ENCODE measurements at regions of chr16 and their contacts with region 1.

Region 1: DNA sequence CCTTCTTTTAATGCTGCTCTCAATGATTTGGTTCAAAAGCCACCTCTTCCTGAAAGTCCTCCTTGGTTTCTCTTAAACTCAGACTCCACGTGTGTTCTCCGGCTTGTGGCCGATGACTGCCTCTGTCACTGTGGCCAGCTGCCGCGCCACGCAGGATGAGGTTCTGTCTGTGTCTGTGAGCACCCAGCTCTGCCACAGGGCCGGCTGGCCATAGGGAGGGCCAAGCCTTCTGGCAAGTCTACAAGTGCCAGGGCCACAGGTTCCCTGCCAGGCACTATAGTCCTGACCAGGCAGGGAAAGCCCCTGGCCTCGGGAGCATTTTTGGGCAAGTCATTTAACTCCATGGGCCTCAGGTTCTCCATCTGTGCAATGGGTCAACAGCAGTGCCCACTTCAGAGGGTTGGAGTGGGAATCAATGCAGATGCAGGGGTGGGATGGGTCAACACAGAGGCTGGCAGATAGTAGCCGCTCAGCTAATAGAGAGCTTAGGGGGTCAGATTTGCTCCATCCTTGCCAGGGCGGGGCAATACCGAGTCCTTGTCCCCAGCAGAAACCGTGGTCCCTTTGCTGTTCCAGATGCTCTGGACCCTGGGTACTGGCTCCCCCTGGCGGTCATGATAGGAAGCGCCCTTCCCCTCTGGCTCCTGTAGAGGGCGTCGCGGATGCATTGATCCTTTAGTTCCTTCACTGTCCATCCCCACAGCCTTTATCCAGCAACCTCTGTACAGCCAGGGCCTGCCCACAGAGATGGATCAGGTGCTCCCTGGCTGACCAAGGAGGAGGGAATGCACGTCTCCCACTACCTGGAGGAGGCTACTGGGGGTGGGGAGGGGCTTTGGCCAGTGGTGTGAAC is 19.3 kb upstream of the ADGRG3 start:
- DNase-seq: peak; percentile 87
- H3K4me3 Mint-ChIP-seq: no peak overlapping the region
- H3K27ac Mint-ChIP-seq: peak overlapping the region; percentile 77
- H3K4me1 Mint-ChIP-seq: peaks cover 40% of the 10 kb centered on the region
- H3K27me3 Mint-ChIP-seq: no peaks in the 10 kb centered on the region

Region 2: GRCh38 chr16:56716761-56717160 is 932.1 kb before region 1 on chr16:
- CTCF ChIA-PET with region 1: no interaction called
- POLR2A ChIA-PET with region 1: no interaction called
- DNase-seq: no peak
- H3K4me3 Mint-ChIP-seq: no peak overlapping the region
- H3K27ac Mint-ChIP-seq: no peak overlapping the region
- H3K4me1 Mint-ChIP-seq: no peaks in the 10 kb centered on the region
- H3K27me3 Mint-ChIP-seq: peaks cover 6% of the 10 kb centered on the region

Region 3: GRCh38 chr16:57531635-57532265 is 117.1 kb before region 1 on chr16:
- CTCF ChIA-PET with region 1: no interaction called
- POLR2A ChIA-PET with region 1: no interaction called
- DNase-seq: no peak
- H3K4me3 Mint-ChIP-seq: peak overlapping the region; percentile 25
- H3K27ac Mint-ChIP-seq: peak overlapping the region; percentile 97
- H3K4me1 Mint-ChIP-seq: peaks cover 70% of the 10 kb centered on the region
- H3K27me3 Mint-ChIP-seq: no peaks in the 10 kb centered on the region

Region 4: GRCh38 chr16:57591086-57591869 is 57.5 kb before region 1 on chr16:
- CTCF ChIA-PET with region 1: interaction called, 55 read pairs
- POLR2A ChIA-PET with region 1: no interaction called
- DNase-seq: peak; percentile 72
- H3K4me3 Mint-ChIP-seq: peak overlapping the region; percentile 53
- H3K27ac Mint-ChIP-seq: peak overlapping the region; percentile 92
- H3K4me1 Mint-ChIP-seq: peaks cover 58% of the 10 kb centered on the region
- H3K27me3 Mint-ChIP-seq: no peaks in the 10 kb centered on the region

Region 5: DNA sequence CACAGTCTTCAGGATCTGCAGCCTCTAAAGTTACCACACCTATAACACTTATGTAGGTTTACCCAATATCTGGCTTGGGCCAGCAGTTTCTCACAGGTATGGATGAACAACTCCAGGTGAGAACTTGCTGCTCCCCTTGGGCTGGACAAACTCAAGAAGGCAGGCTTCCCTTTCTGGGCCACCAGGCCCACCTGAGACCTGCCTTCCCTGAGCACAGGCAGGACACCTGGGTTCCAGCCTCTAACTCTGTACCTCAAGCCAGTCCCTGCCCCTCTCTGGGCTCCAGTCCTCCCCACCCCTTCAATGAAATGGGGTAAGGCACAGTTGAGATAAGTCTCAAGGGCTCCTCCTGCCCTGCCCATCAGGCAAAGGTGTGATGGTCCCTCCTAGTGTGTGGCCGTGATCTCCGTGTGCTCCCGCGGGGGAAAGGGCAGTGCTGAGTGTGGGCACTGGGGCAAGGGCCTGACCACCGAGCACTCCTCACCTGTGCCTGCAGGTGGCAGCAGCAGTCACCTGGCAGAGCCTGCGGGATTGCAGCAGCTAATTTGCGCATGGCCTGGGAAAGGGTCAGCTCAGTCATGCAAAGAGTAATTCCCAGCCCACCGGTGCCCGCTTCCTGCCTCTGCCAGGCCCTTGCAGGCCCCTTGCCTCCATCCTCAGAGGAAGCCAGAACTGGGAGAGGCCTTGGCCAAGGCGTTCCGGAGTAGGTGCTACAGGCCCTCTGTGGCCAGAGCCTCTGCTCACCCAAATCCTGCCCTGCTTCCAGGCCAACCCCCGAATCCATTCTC is 48.6 kb before region 1 on chr16:
- CTCF ChIA-PET with region 1: interaction called, 33 read pairs
- POLR2A ChIA-PET with region 1: no interaction called
- DNase-seq: no peak
- H3K4me3 Mint-ChIP-seq: no peak overlapping the region
- H3K27ac Mint-ChIP-seq: peak overlapping the region; percentile 97
- H3K4me1 Mint-ChIP-seq: peaks cover 67% of the 10 kb centered on the region
- H3K27me3 Mint-ChIP-seq: peaks cover 5% of the 10 kb centered on the region

Region 6: GRCh38 chr16:57609541-57610401 is 39.0 kb before region 1 on chr16:
- CTCF ChIA-PET with region 1: interaction called, 12 read pairs
- POLR2A ChIA-PET with region 1: no interaction called
- DNase-seq: peak; percentile 82
- H3K4me3 Mint-ChIP-seq: peak overlapping the region; percentile 53
- H3K27ac Mint-ChIP-seq: peak overlapping the region; percentile 95
- H3K4me1 Mint-ChIP-seq: peaks cover 59% of the 10 kb centered on the region
- H3K27me3 Mint-ChIP-seq: no peaks in the 10 kb centered on the region

Region 7: GRCh38 chr16:57628008-57628781 is 20.6 kb before region 1 on chr16 and contains the start of gene ADGRG1:
- CTCF ChIA-PET with region 1: interaction called, 22 read pairs
- POLR2A ChIA-PET with region 1: no interaction called
- DNase-seq: peak; percentile 32
- H3K4me3 Mint-ChIP-seq: peak within 1 kb of the TSS; percentile 5
- H3K27ac Mint-ChIP-seq: peak within 1 kb of the TSS; percentile 59
- H3K4me1 Mint-ChIP-seq: peaks cover 23% of the 10 kb centered on the region
- H3K27me3 Mint-ChIP-seq: peaks cover 36% of the 10 kb centered on the region
- total RNA-seq, gene ADGRG1: 2.2 to 2.9 TPM

Region 8: DNA sequence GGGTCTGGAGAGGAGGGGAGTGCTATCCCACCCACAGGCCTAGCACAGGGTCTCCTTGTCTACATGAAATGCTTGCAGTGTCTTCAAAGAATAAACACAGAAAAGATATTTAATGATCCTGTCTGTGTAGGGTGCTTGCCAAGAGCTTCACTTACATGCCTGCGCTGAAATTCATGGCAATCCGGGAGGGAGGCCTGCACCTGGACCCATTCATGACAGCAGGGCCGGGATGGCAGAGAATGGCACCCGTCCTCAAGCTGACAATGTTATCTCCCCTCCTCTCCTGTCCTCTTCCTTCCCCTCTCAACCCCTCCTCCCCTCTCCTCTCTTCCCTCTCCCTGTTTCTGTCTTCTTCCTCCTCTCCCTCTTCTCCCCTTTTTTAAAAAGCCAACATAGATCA is 21.4 kb after region 1 on chr16:
- CTCF ChIA-PET with region 1: interaction called, 10 read pairs
- POLR2A ChIA-PET with region 1: no interaction called
- DNase-seq: no peak
- H3K4me3 Mint-ChIP-seq: no peak overlapping the region
- H3K27ac Mint-ChIP-seq: no peak overlapping the region
- H3K4me1 Mint-ChIP-seq: no peaks in the 10 kb centered on the region
- H3K27me3 Mint-ChIP-seq: peaks cover 27% of the 10 kb centered on the region